T-cell (primary cell): ENCODE measurements at regions of chr4 and their contacts with region 1.

Region 1: GRCh38 chr4:148964456-148964855 is 522.2 kb upstream of the NR3C2 start:
- DNase-seq: no peak
- ATAC-seq: no peak
- H3K4me3 ChIP-seq: no peak overlapping the region
- H3K4me3 Mint-ChIP-seq: no peak overlapping the region
- H3K27ac ChIP-seq: no peak overlapping the region
- H3K27ac Mint-ChIP-seq: no peak overlapping the region
- H3K4me1 ChIP-seq: no peaks in the 10 kb centered on the region
- H3K4me1 Mint-ChIP-seq: no peaks in the 10 kb centered on the region
- H3K27me3 ChIP-seq: no peaks in the 10 kb centered on the region
- H3K27me3 Mint-ChIP-seq: peaks cover 3 to 4% of the 10 kb centered on the region in 2 donors

Region 2: GRCh38 chr4:148951346-148951745 is 13.1 kb before region 1 on chr4:
- CTCF ChIA-PET with region 1: no interaction called
- POLR2A ChIA-PET with region 1: no interaction called
- DNase-seq: no peak
- ATAC-seq: no peak
- H3K4me3 ChIP-seq: no peak overlapping the region
- H3K4me3 Mint-ChIP-seq: no peak overlapping the region
- H3K27ac ChIP-seq: no peak overlapping the region
- H3K27ac Mint-ChIP-seq: no peak overlapping the region
- H3K4me1 ChIP-seq: no peaks in the 10 kb centered on the region
- H3K4me1 Mint-ChIP-seq: no peaks in the 10 kb centered on the region
- H3K27me3 ChIP-seq: no peaks in the 10 kb centered on the region
- H3K27me3 Mint-ChIP-seq: no peaks in the 10 kb centered on the region

Region 3: DNA sequence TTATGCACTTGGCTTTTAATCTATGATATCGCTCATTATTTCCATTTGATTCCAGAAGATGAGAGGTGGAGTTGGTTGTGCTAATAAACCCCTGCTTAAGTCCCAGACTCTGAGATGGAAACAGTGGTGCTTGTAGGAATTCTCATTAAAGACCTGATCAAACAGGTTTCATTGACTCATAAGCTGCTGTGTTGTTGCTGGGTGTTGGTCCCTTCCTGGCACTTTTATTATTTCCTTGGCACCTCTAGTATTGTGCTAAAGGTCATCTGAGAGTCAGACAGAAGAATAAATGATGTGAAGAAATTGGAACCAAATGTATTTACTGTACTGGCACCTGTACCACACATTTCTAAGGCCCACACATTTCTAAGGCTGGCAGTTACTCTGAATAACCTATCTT is 22.5 kb after region 1 on chr4:
- CTCF ChIA-PET with region 1: no interaction called
- POLR2A ChIA-PET with region 1: interaction called in 1 of 2 experiments, 11 read pairs
- DNase-seq: no peak
- ATAC-seq: no peak
- H3K4me3 ChIP-seq: no peak overlapping the region
- H3K4me3 Mint-ChIP-seq: no peak overlapping the region
- H3K27ac ChIP-seq: no peak overlapping the region
- H3K27ac Mint-ChIP-seq: no peak overlapping the region
- H3K4me1 ChIP-seq: no peaks in the 10 kb centered on the region
- H3K4me1 Mint-ChIP-seq: no peaks in the 10 kb centered on the region
- H3K27me3 ChIP-seq: peaks cover 0 to 3% of the 10 kb centered on the region in 2 experiments
- H3K27me3 Mint-ChIP-seq: peaks cover 0 to 2% of the 10 kb centered on the region in 2 donors

Region 4: GRCh38 chr4:149311076-149311475 is 346.6 kb after region 1 on chr4:
- CTCF ChIA-PET with region 1: no interaction called
- POLR2A ChIA-PET with region 1: no interaction called
- DNase-seq: no peak
- ATAC-seq: no peak
- H3K4me3 ChIP-seq: no peak overlapping the region
- H3K4me3 Mint-ChIP-seq: no peak overlapping the region
- H3K27ac ChIP-seq: no peak overlapping the region
- H3K27ac Mint-ChIP-seq: no peak overlapping the region
- H3K4me1 ChIP-seq: no peaks in the 10 kb centered on the region
- H3K4me1 Mint-ChIP-seq: no peaks in the 10 kb centered on the region
- H3K27me3 ChIP-seq: no peaks in the 10 kb centered on the region
- H3K27me3 Mint-ChIP-seq: no peaks in the 10 kb centered on the region